Transverse colon (tissue), 4 donors: ENCODE measurements at regions of chr2 and their contacts with region 1.

Region 1: GRCh38 chr2:181457121-181457740 is at the start of gene ITGA4:
- DNase-seq: peak; percentile 85
- H3K4me3 ChIP-seq: peak within 1 kb of the TSS; percentile 33 to 57 (median 50)
- H3K27ac ChIP-seq: peak within 1 kb of the TSS; percentile 68 to 86 (median 80)
- H3K4me1 ChIP-seq: peaks cover 0 to 15% (median 8%) of the 10 kb centered on the region in 4 donors
- H3K27me3 ChIP-seq: peaks cover 13% of the 10 kb centered on the region
- CTCF ChIP-seq: peak; percentile 49 to 71 (median 62)
- EP300 ChIP-seq: no peak
- POLR2A ChIP-seq: peak; percentile 6
- total RNA-seq, gene ITGA4: 1.1 to 30.8 (median 5.1) TPM

Region 2: GRCh38 chr2:181104512-181105115 is 352.6 kb before region 1 on chr2:
- in situ Hi-C with region 1: loop called in 3 of 4 experiments (anchors 10 to 25 kb)
- intact Hi-C with region 1: no loop called
- DNase-seq: peak; percentile 11
- H3K4me3 ChIP-seq: no peak overlapping the region
- H3K27ac ChIP-seq: no peak overlapping the region
- H3K4me1 ChIP-seq: peaks cover 0 to 5% (median 0%) of the 10 kb centered on the region in 4 donors
- H3K27me3 ChIP-seq: no peaks in the 10 kb centered on the region
- CTCF ChIP-seq: peak; percentile 51 to 61 (median 55)
- EP300 ChIP-seq: no peak
- POLR2A ChIP-seq: no peak